ENCODE measurements at regions of chr5 and their contacts with region 1.

Region 1: GRCh38 chr5:10595678-10596309 is 31.9 kb downstream of the ANKRD33B start:
- DNase-seq: peak; percentile 54
- H3K4me3 Mint-ChIP-seq: peak overlapping the region; percentile 9
- H3K27ac Mint-ChIP-seq: peak overlapping the region; percentile 44
- H3K4me1 Mint-ChIP-seq: peaks cover 77% of the 10 kb centered on the region
- H3K27me3 Mint-ChIP-seq: peaks cover 4% of the 10 kb centered on the region

Region 2: DNA sequence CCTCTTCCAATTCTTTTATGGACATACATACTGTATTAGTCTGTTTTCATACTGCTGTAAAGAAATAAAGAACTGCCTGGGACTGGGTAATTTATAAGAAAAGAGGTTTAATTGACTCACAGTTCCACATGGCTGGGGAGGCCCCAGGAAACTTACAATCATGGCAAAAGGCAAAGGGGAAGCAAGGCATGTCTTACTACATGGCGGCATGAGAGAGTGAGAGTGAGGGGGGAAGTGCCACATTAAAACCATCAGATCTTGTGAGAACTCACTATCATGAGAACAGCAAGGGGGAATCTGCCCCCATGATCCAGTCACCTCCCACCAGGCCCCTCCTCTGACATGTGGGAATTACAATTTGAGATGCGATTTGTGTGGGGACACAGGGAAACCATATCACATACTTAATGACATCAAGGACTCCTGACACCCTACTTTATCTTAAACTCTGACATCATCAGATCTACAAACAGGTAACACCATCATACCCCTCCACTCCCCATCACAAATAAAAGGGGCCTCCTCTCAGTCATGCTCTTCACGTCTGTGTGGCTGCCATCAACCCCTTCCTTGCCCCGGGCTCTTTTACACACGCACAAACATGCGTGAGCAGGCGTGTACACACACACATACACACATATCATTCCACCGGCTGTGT is 22.2 kb before region 1 on chr5:
- intact Hi-C with region 1: no loop called
- DNase-seq: no peak
- H3K4me3 Mint-ChIP-seq: no peak overlapping the region
- H3K27ac Mint-ChIP-seq: no peak overlapping the region
- H3K4me1 Mint-ChIP-seq: peaks cover 26% of the 10 kb centered on the region
- H3K27me3 Mint-ChIP-seq: no peaks in the 10 kb centered on the region

Region 3: GRCh38 chr5:10627160-10627701 is 31.4 kb after region 1 on chr5:
- intact Hi-C with region 1: loop called (anchors 1 kb)
- DNase-seq: no peak
- H3K4me3 Mint-ChIP-seq: peak overlapping the region; percentile 77
- H3K27ac Mint-ChIP-seq: peak overlapping the region; percentile 90
- H3K4me1 Mint-ChIP-seq: peaks cover 50% of the 10 kb centered on the region
- H3K27me3 Mint-ChIP-seq: peaks cover 3% of the 10 kb centered on the region

Measured in activated T-helper 1 cell treated with anti-CD3 and anti-CD28 coated beads, Interleukin-12 subunit alpha, Interleukin-12 subunit beta, Interleukin-2, Interleukin-4 antibody, amounts not matched to agents 30 ng/mL and 10 ng/mL and 1 ng/mL, durations not matched to agents 14 hours and 24 hours and 36 hours (primary cell).